Panc1 (cell line): ENCODE measurements at regions of chr15 and their contacts with region 1.

Region 1: GRCh38 chr15:77036537-77037387 is 34.1 kb downstream of the TSPAN3 start:
- DNase-seq: no peak
- ATAC-seq: no peak
- H3K4me3 ChIP-seq: no peak overlapping the region
- H3K27ac ChIP-seq: no peak overlapping the region
- H3K4me1 ChIP-seq: no peaks in the 10 kb centered on the region
- H3K27me3 ChIP-seq: no peaks in the 10 kb centered on the region
- CTCF ChIP-seq: no peak

Region 2: GRCh38 chr15:76730262-76730661 is 306.5 kb before region 1 on chr15:
- CTCF ChIA-PET with region 1: no interaction called
- POLR2A ChIA-PET with region 1: no interaction called
- in situ Hi-C with region 1: no loop called
- intact Hi-C with region 1: no loop called
- DNase-seq: no peak
- ATAC-seq: no peak
- H3K4me3 ChIP-seq: no peak overlapping the region
- H3K27ac ChIP-seq: no peak overlapping the region
- H3K4me1 ChIP-seq: no peaks in the 10 kb centered on the region
- H3K27me3 ChIP-seq: no peaks in the 10 kb centered on the region
- CTCF ChIP-seq: no peak

Region 3: DNA sequence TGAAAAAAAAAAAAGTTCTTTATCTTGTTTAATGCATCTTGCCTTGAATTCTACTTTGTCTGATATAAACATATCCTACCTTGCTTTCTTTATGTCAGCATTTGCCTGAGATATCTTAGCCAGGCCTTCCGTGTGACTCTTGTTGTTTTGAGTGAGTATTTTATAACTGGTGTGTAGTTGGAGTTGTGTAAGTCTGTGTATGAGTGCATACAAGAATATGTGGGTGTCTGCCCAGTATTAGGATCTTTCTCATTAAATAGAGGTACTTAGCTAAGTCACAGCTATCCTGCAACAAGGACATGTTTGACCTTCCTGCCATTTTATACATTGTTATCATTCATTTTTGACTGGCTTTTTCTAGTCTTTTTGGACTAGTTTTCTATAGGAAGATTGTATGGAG is 56.7 kb after region 1 on chr15:
- CTCF ChIA-PET with region 1: no interaction called
- POLR2A ChIA-PET with region 1: interaction called, 23 read pairs
- in situ Hi-C with region 1: no loop called
- intact Hi-C with region 1: no loop called
- DNase-seq: no peak
- ATAC-seq: no peak
- H3K4me3 ChIP-seq: no peak overlapping the region
- H3K27ac ChIP-seq: no peak overlapping the region
- H3K4me1 ChIP-seq: no peaks in the 10 kb centered on the region
- H3K27me3 ChIP-seq: no peaks in the 10 kb centered on the region
- CTCF ChIP-seq: no peak

Region 4: GRCh38 chr15:77118882-77119321 is 82.1 kb after region 1 on chr15:
- CTCF ChIA-PET with region 1: no interaction called
- POLR2A ChIA-PET with region 1: no interaction called
- in situ Hi-C with region 1: no loop called
- intact Hi-C with region 1: no loop called
- DNase-seq: peak; percentile 45
- ATAC-seq: peak; percentile 79
- H3K4me3 ChIP-seq: no peak overlapping the region
- H3K27ac ChIP-seq: no peak overlapping the region
- H3K4me1 ChIP-seq: peaks cover 11% of the 10 kb centered on the region
- H3K27me3 ChIP-seq: no peaks in the 10 kb centered on the region
- CTCF ChIP-seq: peak; percentile 73